Left ventricle myocardium superior (tissue), 1 donor: ENCODE measurements at regions of chr2 and their contacts with region 1.

Region 1: DNA sequence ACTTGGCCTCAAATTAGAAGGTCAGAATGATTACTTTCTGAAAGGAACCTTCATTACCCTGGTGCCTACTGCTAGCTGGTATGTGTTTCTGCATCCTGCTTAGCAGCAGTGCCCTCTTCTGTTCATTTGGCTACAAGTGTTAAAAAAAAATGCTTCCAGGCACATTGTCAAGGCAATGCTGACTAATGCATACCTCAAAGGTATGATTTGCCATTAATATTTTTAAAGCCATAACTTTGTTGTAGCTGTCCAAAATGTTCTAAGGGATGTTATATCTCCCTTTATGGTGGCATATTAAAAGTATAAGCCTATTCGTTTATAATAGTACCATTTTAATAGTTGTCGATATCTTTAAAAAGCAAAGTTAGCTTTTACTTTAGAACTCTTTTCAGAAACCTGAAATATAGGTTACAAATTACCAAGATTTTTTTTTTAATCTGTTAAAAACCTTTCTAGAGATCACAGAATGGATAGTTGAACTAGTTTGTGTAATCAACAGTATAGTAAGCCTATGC is 52.0 kb upstream of the FAM171B start:
- DNase-seq: no peak
- ATAC-seq: peak; percentile 90

Region 2: DNA sequence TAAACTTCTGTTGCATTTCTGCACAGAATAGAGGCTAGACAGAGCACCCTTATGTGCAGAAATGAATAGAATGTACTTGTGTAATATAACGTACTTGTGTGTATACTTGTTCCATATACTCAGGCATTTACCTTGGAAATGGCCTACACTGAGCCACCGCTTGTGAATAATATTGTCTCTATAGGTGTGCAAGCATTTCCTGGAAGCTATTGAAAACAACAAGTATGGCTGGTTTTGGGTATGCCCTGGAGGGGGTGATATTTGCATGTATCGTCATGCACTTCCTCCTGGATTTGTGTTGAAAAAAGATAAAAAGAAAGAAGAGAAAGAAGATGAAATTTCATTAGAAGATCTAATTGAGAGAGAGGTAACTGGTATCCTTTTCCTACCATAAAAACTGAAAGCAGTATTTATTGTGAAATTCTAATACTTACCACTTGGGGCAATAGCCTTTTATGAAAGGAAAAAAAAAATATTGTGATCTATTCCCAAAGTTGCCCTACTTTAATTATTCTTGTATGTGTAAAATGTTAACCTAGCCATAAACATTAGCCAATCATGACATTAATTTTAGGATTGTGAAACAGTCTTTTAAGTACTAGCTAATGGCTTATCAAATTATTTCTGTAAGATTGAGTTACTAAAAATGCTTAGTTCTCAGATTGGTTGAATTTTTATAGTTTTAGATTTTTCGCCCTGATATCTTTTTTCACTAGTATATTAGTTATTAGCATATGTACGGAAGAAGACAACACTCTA is 137.8 kb before region 1 on chr2:
- intact Hi-C with region 1: loop called (anchors 2 kb)
- DNase-seq: no peak
- ATAC-seq: no peak